Activated CD4-positive, alpha-beta memory T cell treated with anti-CD3 and anti-CD28 coated beads for 36 hours (primary cell): ENCODE measurements at regions of chr6 and their contacts with region 1.

Region 1: GRCh38 chr6:41958022-41958856 is 16.6 kb upstream of the CCND3 start:
- DNase-seq: peak; percentile 66
- H3K4me3 Mint-ChIP-seq: peak overlapping the region; percentile 54
- H3K27ac Mint-ChIP-seq: peak overlapping the region; percentile 97
- H3K4me1 Mint-ChIP-seq: peaks cover 72% of the 10 kb centered on the region
- H3K27me3 Mint-ChIP-seq: no peaks in the 10 kb centered on the region

Region 2: GRCh38 chr6:41941280-41942066 is 16.8 kb before region 1 on chr6 and contains the start of gene CCND3:
- CTCF ChIA-PET with region 1: interaction called, 3 read pairs
- POLR2A ChIA-PET with region 1: interaction called, 12 read pairs
- intact Hi-C with region 1: loop called (anchors 1 kb)
- DNase-seq: peak; percentile 94
- H3K4me3 Mint-ChIP-seq: peak within 1 kb of the TSS; percentile 99
- H3K27ac Mint-ChIP-seq: peak within 1 kb of the TSS; percentile 94
- H3K4me1 Mint-ChIP-seq: peaks cover 50% of the 10 kb centered on the region
- H3K27me3 Mint-ChIP-seq: no peaks in the 10 kb centered on the region
- total RNA-seq, gene CCND3: 570 to 573 TPM

Region 3: DNA sequence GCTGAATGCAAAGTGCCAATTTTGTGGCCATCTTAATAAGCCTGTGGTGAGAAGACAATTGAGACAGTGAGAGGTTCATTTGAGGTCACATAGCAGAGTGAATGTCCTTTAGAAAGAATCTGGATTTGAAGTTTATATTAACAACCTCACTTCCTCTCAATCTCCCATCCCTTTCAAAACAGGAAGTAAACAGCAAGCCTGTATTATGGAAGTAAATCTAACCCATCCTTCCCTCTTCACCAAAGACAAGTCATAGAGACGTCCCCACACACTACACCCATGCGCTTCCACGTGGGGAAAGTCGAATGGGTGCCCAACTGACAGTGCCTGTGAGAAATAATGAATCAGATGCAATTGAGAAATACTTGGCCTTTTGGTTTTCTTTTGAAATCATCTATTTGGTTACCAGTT is 12.2 kb after region 1 on chr6:
- CTCF ChIA-PET with region 1: interaction called, 3 read pairs
- POLR2A ChIA-PET with region 1: interaction called, 11 read pairs
- intact Hi-C with region 1: loop called (anchors 1 kb)
- DNase-seq: peak; percentile 82
- H3K4me3 Mint-ChIP-seq: peak overlapping the region; percentile 57
- H3K27ac Mint-ChIP-seq: peak overlapping the region; percentile 99
- H3K4me1 Mint-ChIP-seq: peaks cover 81% of the 10 kb centered on the region
- H3K27me3 Mint-ChIP-seq: no peaks in the 10 kb centered on the region

Region 4: GRCh38 chr6:41976794-41977484 is 18.7 kb after region 1 on chr6:
- CTCF ChIA-PET with region 1: interaction called, 3 read pairs
- POLR2A ChIA-PET with region 1: interaction called, 11 read pairs
- intact Hi-C with region 1: loop called (anchors 1 kb)
- DNase-seq: peak; percentile 64
- H3K4me3 Mint-ChIP-seq: peak overlapping the region; percentile 57
- H3K27ac Mint-ChIP-seq: peak overlapping the region; percentile 94
- H3K4me1 Mint-ChIP-seq: peaks cover 67% of the 10 kb centered on the region
- H3K27me3 Mint-ChIP-seq: no peaks in the 10 kb centered on the region

Region 5: DNA sequence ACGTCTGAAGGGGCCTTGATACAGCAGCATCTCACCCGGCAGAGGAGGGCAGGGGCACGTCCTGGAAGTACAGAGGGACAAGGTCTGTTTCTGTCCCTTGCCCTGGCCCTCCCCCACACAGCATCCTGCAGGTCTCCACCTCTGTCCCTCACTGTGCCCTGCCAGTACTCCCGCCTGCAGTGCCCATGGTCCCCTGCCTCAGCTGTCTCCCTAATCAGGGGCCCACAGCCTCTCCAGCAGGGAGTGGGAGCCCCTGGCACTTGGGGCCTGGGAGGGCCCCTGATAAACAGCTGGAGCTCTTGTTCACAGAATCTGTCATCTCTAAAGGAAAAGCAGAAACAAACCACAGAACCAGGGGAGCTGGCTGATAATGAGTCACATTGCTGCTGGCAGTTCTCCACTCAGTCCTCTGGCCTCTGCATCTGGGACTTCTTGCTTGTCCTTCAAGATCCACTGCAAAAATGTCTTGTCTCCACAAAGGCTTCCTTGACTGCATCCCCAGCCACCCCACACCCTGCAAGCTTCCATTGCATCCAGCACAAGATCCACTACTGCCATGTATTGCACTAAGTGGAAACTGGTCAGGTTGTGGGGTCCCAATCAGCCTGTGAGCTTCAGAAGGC is 58.9 kb after region 1 on chr6:
- CTCF ChIA-PET with region 1: interaction called, 3 read pairs
- POLR2A ChIA-PET with region 1: interaction called, 3 read pairs
- intact Hi-C with region 1: loop called (anchors 1 kb)
- DNase-seq: peak; percentile 70
- H3K4me3 Mint-ChIP-seq: peak overlapping the region; percentile 57
- H3K27ac Mint-ChIP-seq: peak overlapping the region; percentile 92
- H3K4me1 Mint-ChIP-seq: peaks cover 67% of the 10 kb centered on the region
- H3K27me3 Mint-ChIP-seq: no peaks in the 10 kb centered on the region

Region 6: GRCh38 chr6:42038811-42039408 is 80.7 kb after region 1 on chr6:
- CTCF ChIA-PET with region 1: interaction called, 21 read pairs
- POLR2A ChIA-PET with region 1: interaction called, 9 read pairs
- intact Hi-C with region 1: loop called (anchors 1 kb)
- DNase-seq: no peak
- H3K4me3 Mint-ChIP-seq: peak overlapping the region; percentile 78
- H3K27ac Mint-ChIP-seq: peak overlapping the region; percentile 96
- H3K4me1 Mint-ChIP-seq: peaks cover 67% of the 10 kb centered on the region
- H3K27me3 Mint-ChIP-seq: no peaks in the 10 kb centered on the region